ENCODE measurements at regions of chr6 and their contacts with region 1.

Region 1: GRCh38 chr6:35522660-35523658 is 10.3 kb upstream of the TULP1 start:
- DNase-seq: no peak
- H3K4me3 ChIP-seq: peak overlapping the region; percentile 10; the same call in 1 of the 2 replicates
- H3K27ac ChIP-seq: no peak overlapping the region
- H3K27me3 ChIP-seq: peaks cover 3% of the 10 kb centered on the region
- CTCF ChIP-seq: peak; percentile 93

Region 2: GRCh38 chr6:35496841-35497570 is 26.0 kb before region 1 on chr6 and contains the start of gene TEAD3:
- CTCF ChIA-PET with region 1: interaction called, 10 read pairs
- POLR2A ChIA-PET with region 1: no interaction called
- DNase-seq: no peak
- H3K4me3 ChIP-seq: peak within 1 kb of the TSS; percentile 78
- H3K27ac ChIP-seq: peak within 1 kb of the TSS; percentile 88
- H3K27me3 ChIP-seq: no peaks in the 10 kb centered on the region
- CTCF ChIP-seq: no peak
- polyA plus RNA-seq, gene TEAD3: 16.6 and 22.8 TPM in 2 replicates

Region 3: DNA sequence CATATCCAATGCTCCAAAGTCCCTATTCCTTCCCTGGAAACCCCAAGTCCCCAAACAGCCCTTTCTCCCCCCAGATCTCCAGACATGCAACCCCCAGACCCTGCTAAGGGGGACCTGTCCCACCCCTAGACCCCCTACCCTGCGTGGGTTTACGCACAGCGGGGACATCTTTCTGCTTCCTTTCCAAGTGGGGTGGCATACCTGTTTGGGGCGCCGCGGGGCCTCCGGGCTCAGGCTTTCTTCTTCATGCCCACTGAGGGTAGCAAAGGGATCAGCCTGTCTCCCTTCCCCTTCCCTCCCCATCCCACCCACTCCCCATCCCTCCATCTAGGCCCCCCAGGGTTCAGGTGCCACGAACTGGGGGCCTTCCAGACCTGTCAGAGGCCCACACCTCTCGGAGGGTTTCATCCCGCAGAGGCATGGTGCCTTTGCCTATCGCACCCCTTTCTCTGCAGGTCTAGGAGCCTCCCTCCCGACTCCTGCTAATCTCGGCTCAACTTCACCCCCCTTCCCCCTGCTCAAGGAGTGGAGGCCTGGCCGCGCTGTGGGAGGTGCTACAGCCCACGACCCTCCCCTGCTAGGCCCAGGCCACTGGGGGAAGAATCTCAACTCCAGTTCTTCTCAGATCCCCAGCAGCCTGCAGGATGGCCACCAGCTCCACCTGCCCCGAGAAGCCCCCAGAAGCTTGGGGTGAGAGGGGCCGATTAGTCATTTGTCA is 10.4 kb before region 1 on chr6 and contains the start of gene TULP1:
- CTCF ChIA-PET with region 1: interaction called, 14 read pairs
- POLR2A ChIA-PET with region 1: no interaction called
- DNase-seq: no peak
- H3K4me3 ChIP-seq: no peak within 1 kb of the TSS
- H3K27ac ChIP-seq: no peak within 1 kb of the TSS
- H3K27me3 ChIP-seq: peaks cover 48% of the 10 kb centered on the region
- CTCF ChIP-seq: no peak
- polyA plus RNA-seq, gene TULP1: not detected in 2 replicates

Region 4: DNA sequence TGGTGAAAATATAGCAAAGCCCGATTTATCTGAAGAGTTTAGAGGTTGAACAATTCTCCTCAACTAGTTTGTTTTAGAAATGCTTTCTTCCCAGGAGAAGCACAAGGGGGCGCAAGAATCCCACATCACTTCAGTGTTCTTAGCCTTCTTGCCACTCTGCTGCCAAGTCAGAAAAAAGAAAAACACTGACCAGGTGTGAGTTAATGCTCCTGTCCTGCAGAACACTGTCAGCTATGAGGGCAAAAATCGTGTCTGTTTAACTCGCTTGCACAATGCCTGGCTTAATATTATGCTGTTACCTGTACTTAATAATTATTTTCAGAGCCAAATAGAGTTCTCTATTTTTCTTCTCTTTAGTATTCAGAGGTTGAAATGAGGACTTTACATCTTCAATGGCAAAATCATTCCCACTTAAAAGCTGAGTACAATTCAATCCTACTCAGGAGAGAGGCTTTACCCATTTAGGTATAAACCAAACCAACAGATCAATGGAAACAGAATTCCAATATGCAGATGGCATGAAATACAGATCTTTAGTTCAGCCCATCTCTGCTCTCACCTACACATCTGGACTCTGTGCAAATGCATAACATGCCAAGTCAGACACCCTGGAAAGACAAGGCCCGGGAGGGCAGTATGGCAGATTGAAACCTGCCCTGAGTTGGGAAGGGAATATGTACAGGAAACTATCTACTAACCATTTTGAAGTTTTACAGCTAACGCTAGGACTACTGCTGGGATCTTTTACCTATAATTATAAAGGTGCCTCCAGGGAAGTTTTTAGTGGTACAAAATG is 61.1 kb after region 1 on chr6:
- CTCF ChIA-PET with region 1: interaction called, 16 read pairs
- POLR2A ChIA-PET with region 1: no interaction called
- DNase-seq: peak; percentile 53
- H3K4me3 ChIP-seq: no peak overlapping the region
- H3K27ac ChIP-seq: no peak overlapping the region
- H3K27me3 ChIP-seq: no peaks in the 10 kb centered on the region
- CTCF ChIP-seq: peak; percentile 88

Region 5: DNA sequence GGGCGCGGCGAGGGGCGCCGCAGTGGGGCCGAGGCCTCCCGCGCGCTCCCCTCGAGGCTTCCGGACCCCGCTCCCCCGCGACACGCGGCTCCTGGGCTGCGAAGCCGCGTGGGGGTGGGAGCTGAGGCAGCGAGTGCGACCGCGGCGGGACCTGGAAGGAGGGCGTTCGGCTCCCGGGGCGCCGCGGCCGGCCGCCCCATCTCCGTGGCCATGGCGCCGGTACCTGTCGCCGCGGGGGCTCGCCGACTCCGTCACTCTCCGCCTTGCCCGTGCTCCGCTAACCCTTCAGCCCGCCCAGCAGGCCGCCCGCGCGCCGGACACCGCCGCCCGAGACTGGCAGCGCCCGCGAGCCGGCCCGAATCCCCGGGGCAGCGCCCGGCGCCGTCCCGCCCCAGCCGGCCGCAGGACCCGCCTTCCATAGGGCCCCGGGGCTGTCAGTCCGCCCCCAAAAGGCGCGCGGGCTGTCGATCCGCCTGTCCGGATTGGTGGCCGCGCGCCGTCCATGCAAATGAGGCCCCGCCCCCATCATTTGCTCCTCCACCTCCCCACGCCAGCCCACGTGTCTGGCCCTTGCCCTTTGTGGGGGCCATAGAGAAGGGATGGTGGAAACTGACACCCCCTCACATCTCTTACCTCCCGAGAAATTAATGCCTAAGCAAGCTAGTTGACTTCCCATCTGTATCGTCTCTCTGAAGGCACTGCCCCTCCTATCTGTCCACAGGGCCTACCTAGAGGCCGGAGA is 165.8 kb after region 1 on chr6 and contains the start of gene FKBP5:
- CTCF ChIA-PET with region 1: interaction called, 15 read pairs
- POLR2A ChIA-PET with region 1: no interaction called
- DNase-seq: peak; percentile 67
- H3K4me3 ChIP-seq: peak within 1 kb of the TSS; percentile 75
- H3K27ac ChIP-seq: no peak within 1 kb of the TSS
- H3K27me3 ChIP-seq: no peaks in the 10 kb centered on the region
- CTCF ChIP-seq: no peak
- polyA plus RNA-seq, gene FKBP5: 6.9 and 7.6 TPM in 2 replicates

Measured in AG04450 (cell line).